Caco-2 (cell line): ENCODE measurements at regions of chr10 and their contacts with region 1.

Region 1: GRCh38 chr10:113521123-113521795 is 31.6 kb upstream of the HABP2 start:
- DNase-seq: peak; percentile 65 to 78
- H3K4me3 ChIP-seq: no peak overlapping the region
- H3K4me3 Mint-ChIP-seq: no peak overlapping the region
- H3K27ac Mint-ChIP-seq: no peak overlapping the region
- H3K4me1 ChIP-seq: no peaks in the 10 kb centered on the region
- H3K4me1 Mint-ChIP-seq: no peaks in the 10 kb centered on the region
- H3K27me3 ChIP-seq: no peaks in the 10 kb centered on the region
- H3K27me3 Mint-ChIP-seq: no peaks in the 10 kb centered on the region
- CTCF ChIP-seq: peak; percentile 89 to 99

Region 2: DNA sequence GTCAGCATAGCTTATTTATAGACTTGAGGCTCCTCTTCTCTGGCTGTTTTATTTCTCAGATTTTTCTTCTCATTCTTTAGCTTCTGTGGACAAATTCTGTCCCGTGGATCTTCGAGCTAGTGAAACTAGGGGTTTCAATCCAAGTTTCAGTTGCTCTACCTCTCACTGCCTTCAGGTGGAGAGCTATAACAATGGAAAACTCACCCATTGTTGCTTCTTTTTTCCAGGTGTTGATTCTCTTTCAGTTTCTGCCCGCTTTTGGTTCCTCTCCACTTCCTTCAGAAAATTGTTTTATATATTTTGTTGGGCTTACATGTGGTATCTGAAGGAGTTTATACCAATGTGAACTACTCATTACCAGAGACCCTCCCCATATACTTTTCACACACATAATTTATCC is 305.2 kb before region 1 on chr10:
- CTCF ChIA-PET with region 1: interaction called, 6 read pairs
- POLR2A ChIA-PET with region 1: no interaction called
- intact Hi-C with region 1: loop called (anchors 1 kb)
- DNase-seq: peak in 1 of 2 experiments; percentile 31
- H3K4me3 ChIP-seq: no peak overlapping the region
- H3K4me3 Mint-ChIP-seq: no peak overlapping the region
- H3K27ac Mint-ChIP-seq: no peak overlapping the region
- H3K4me1 ChIP-seq: 0 out of 2 replicates have a peak, but pooled peaks cover 3% of the 10 kb centered on the region
- H3K4me1 Mint-ChIP-seq: peaks cover 7% of the 10 kb centered on the region
- H3K27me3 ChIP-seq: no peaks in the 10 kb centered on the region
- H3K27me3 Mint-ChIP-seq: peaks cover 3% of the 10 kb centered on the region
- CTCF ChIP-seq: peak; percentile 41 to 42

Region 3: GRCh38 chr10:113415246-113415645 is 106.0 kb before region 1 on chr10:
- CTCF ChIA-PET with region 1: no interaction called
- POLR2A ChIA-PET with region 1: no interaction called
- intact Hi-C with region 1: no loop called
- DNase-seq: no peak
- H3K4me3 ChIP-seq: no peak overlapping the region
- H3K4me3 Mint-ChIP-seq: no peak overlapping the region
- H3K27ac Mint-ChIP-seq: no peak overlapping the region
- H3K4me1 ChIP-seq: no peaks in the 10 kb centered on the region
- H3K4me1 Mint-ChIP-seq: no peaks in the 10 kb centered on the region
- H3K27me3 ChIP-seq: no peaks in the 10 kb centered on the region
- H3K27me3 Mint-ChIP-seq: peaks cover 12% of the 10 kb centered on the region
- CTCF ChIP-seq: no peak

Region 4: GRCh38 chr10:113441220-113441619 is 80.0 kb before region 1 on chr10:
- CTCF ChIA-PET with region 1: interaction called, 3 read pairs
- POLR2A ChIA-PET with region 1: no interaction called
- intact Hi-C with region 1: loop called (anchors 2 kb)
- DNase-seq: peak in 1 of 2 experiments; percentile 18
- H3K4me3 ChIP-seq: no peak overlapping the region
- H3K4me3 Mint-ChIP-seq: no peak overlapping the region
- H3K27ac Mint-ChIP-seq: no peak overlapping the region
- H3K4me1 ChIP-seq: no peaks in the 10 kb centered on the region
- H3K4me1 Mint-ChIP-seq: peaks cover 1% of the 10 kb centered on the region
- H3K27me3 ChIP-seq: no peaks in the 10 kb centered on the region
- H3K27me3 Mint-ChIP-seq: no peaks in the 10 kb centered on the region
- CTCF ChIP-seq: peak; percentile 9 to 12

Region 5: GRCh38 chr10:113539789-113540188 is 18.5 kb after region 1 on chr10:
- CTCF ChIA-PET with region 1: no interaction called
- POLR2A ChIA-PET with region 1: no interaction called
- intact Hi-C with region 1: loop called (anchors 2 kb)
- DNase-seq: peak; percentile 52 to 56
- H3K4me3 ChIP-seq: no peak overlapping the region
- H3K4me3 Mint-ChIP-seq: no peak overlapping the region
- H3K27ac Mint-ChIP-seq: peak overlapping the region; percentile 66
- H3K4me1 ChIP-seq: peaks cover 47% of the 10 kb centered on the region
- H3K4me1 Mint-ChIP-seq: peaks cover 33% of the 10 kb centered on the region
- H3K27me3 ChIP-seq: no peaks in the 10 kb centered on the region
- H3K27me3 Mint-ChIP-seq: no peaks in the 10 kb centered on the region
- CTCF ChIP-seq: no peak

Region 6: DNA sequence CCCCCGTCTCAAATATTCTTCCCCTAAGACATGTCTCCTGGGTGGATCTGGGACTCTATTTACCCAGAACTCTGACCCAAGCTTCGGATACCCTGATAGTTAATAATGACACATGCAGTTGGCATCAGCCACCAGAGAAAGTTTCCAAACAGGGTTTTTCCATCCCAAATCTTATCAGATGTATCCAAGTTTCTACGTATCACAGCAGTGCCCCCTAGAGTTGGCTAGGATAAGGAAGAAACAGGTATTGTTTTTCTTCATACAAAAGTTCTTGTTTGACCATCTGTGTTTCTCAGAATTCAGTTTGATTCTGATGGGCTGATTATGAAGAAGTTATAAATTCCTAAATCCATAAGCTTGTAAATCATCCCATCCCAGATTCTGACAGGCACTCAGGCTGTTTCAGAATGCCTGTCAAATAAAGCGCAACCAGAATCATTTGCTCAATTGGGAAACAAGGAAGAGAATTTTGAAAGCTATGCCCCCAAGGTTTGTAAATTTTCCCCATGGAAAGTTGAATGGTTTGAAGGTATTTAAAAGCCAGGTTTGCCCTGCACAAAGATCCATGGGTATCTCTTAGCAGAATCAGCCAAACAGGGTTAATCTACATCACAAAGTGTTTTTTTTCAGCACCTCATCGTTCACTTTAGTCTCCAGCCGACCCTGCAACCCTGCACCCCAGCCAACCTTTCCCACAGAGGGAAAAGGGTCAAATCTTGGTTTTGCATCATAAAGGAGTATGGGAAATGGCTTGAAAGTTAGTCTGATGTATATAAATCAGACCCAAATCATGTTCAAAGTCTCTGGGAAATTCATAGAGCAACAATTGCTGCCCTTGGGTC is 95.2 kb after region 1 on chr10:
- CTCF ChIA-PET with region 1: no interaction called
- POLR2A ChIA-PET with region 1: no interaction called
- intact Hi-C with region 1: loop called (anchors 1 kb)
- DNase-seq: peak in 1 of 2 experiments; percentile 28
- H3K4me3 ChIP-seq: no peak overlapping the region
- H3K4me3 Mint-ChIP-seq: no peak overlapping the region
- H3K27ac Mint-ChIP-seq: no peak overlapping the region
- H3K4me1 ChIP-seq: no peaks in the 10 kb centered on the region
- H3K4me1 Mint-ChIP-seq: no peaks in the 10 kb centered on the region
- H3K27me3 ChIP-seq: no peaks in the 10 kb centered on the region
- H3K27me3 Mint-ChIP-seq: peaks cover 5% of the 10 kb centered on the region
- CTCF ChIP-seq: peak; percentile 48 to 69

Region 7: DNA sequence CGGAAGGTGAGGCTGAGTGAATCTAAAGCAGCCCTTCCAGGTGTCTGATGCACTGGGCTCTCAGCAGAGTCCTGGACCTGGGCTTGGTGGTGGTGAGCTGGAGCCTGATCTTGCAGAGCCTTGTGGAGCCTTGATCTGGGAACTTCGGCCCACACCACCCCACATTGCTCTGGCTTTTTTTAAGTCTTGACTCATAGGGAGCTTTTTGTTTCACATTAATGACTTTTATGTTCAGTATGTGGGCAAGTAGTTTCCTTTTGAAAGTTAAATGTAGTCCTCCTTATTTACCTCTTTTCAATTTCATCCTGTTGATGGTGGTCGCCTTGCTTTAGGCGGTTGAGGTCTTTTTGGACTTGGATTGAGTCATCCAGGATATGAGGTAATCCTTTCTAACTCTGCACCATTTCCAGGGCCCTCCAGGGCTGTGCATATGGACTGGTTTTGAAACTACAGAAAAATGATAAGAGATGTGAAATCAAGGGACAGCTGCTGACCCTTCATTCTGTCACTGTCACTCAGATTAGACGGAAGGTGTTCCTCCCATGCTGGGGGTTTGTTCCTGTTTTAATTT is 145.5 kb after region 1 on chr10:
- CTCF ChIA-PET with region 1: no interaction called
- POLR2A ChIA-PET with region 1: no interaction called
- intact Hi-C with region 1: no loop called
- DNase-seq: no peak
- H3K4me3 ChIP-seq: no peak overlapping the region
- H3K4me3 Mint-ChIP-seq: no peak overlapping the region
- H3K27ac Mint-ChIP-seq: no peak overlapping the region
- H3K4me1 ChIP-seq: peaks cover 3% of the 10 kb centered on the region; the same call in 1 of the 2 replicates
- H3K4me1 Mint-ChIP-seq: peaks cover 6% of the 10 kb centered on the region
- H3K27me3 ChIP-seq: no peaks in the 10 kb centered on the region
- H3K27me3 Mint-ChIP-seq: no peaks in the 10 kb centered on the region
- CTCF ChIP-seq: no peak

Region 8: DNA sequence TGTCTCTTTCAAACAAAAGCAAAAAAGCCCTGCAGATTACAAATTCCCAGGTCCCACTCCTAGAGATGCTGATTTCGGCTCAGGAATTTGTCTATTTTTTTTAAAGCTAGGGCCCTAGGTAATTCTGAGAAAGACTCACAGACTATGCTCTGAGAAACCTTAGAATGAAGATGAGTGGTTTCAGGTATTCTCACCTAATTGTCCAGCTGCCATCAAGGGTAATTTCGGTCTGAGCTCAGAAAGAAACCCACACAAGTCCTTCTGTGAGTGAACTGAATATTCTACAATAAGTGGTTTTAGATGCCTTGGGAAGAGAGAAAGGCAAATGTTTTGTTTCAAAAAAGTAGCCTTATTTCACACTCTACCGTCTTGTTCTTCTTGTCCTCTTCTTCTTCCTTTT is 286.9 kb after region 1 on chr10:
- CTCF ChIA-PET with region 1: no interaction called
- POLR2A ChIA-PET with region 1: no interaction called
- intact Hi-C with region 1: no loop called
- DNase-seq: no peak
- H3K4me3 ChIP-seq: no peak overlapping the region
- H3K4me3 Mint-ChIP-seq: no peak overlapping the region
- H3K27ac Mint-ChIP-seq: no peak overlapping the region
- H3K4me1 ChIP-seq: no peaks in the 10 kb centered on the region
- H3K4me1 Mint-ChIP-seq: no peaks in the 10 kb centered on the region
- H3K27me3 ChIP-seq: no peaks in the 10 kb centered on the region
- H3K27me3 Mint-ChIP-seq: peaks cover 9% of the 10 kb centered on the region
- CTCF ChIP-seq: no peak